CD4-positive, alpha-beta T cell (primary cell): ENCODE measurements at regions of chr6 and their contacts with region 1.

Region 1: DNA sequence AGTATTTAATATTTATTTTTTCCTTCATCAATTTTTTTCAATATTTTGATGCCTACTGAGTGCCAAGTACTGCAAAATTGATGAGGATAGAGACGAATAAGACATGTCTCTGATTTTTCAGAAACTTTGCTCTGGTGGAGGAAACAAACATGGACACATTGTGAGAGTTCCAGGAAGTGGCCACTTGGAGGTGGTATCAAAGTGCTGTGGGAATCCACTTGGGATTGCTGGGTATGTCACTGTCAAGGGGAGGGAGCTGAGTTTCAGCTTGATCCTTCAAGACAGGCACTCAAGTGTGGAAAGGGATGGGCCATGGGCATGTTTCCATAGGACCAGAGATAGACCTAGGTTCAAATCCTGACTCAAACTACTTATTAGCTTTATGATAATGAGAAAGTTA is 24.5 kb upstream of the ABCC10 start:
- DNase-seq: no peak
- ATAC-seq: no peak
- H3K4me3 ChIP-seq: no peak overlapping the region
- H3K4me3 Mint-ChIP-seq: no peak overlapping the region
- H3K27ac ChIP-seq: no peak overlapping the region
- H3K27ac Mint-ChIP-seq: no peak overlapping the region
- H3K4me1 ChIP-seq: no peaks in the 10 kb centered on the region
- H3K4me1 Mint-ChIP-seq: peaks cover 3% of the 10 kb centered on the region
- H3K27me3 ChIP-seq: peaks cover 0 to 5% of the 10 kb centered on the region in 2 experiments
- H3K27me3 Mint-ChIP-seq: peaks cover 20% of the 10 kb centered on the region
- CTCF ChIP-seq: no peak

Region 2: GRCh38 chr6:41824571-41825569 is 1578.0 kb before region 1 on chr6:
- CTCF ChIA-PET with region 1: no interaction called
- POLR2A ChIA-PET with region 1: no interaction called
- intact Hi-C with region 1: no loop called
- DNase-seq: no peak
- ATAC-seq: no peak
- H3K4me3 ChIP-seq: no peak overlapping the region
- H3K4me3 Mint-ChIP-seq: no peak overlapping the region
- H3K27ac ChIP-seq: no peak overlapping the region
- H3K27ac Mint-ChIP-seq: no peak overlapping the region
- H3K4me1 ChIP-seq: no peaks in the 10 kb centered on the region
- H3K4me1 Mint-ChIP-seq: no peaks in the 10 kb centered on the region
- H3K27me3 ChIP-seq: no peaks in the 10 kb centered on the region
- H3K27me3 Mint-ChIP-seq: no peaks in the 10 kb centered on the region
- CTCF ChIP-seq: no peak

Region 3: GRCh38 chr6:43216200-43216599 is 186.6 kb before region 1 on chr6:
- CTCF ChIA-PET with region 1: no interaction called
- POLR2A ChIA-PET with region 1: no interaction called
- intact Hi-C with region 1: no loop called
- DNase-seq: no peak
- ATAC-seq: no peak
- H3K4me3 ChIP-seq: no peak overlapping the region
- H3K4me3 Mint-ChIP-seq: no peak overlapping the region
- H3K27ac ChIP-seq: no peak overlapping the region
- H3K27ac Mint-ChIP-seq: no peak overlapping the region
- H3K4me1 ChIP-seq: peaks cover 6% of the 10 kb centered on the region
- H3K4me1 Mint-ChIP-seq: peaks cover 13% of the 10 kb centered on the region
- H3K27me3 ChIP-seq: no peaks in the 10 kb centered on the region
- H3K27me3 Mint-ChIP-seq: no peaks in the 10 kb centered on the region
- CTCF ChIP-seq: no peak

Region 4: DNA sequence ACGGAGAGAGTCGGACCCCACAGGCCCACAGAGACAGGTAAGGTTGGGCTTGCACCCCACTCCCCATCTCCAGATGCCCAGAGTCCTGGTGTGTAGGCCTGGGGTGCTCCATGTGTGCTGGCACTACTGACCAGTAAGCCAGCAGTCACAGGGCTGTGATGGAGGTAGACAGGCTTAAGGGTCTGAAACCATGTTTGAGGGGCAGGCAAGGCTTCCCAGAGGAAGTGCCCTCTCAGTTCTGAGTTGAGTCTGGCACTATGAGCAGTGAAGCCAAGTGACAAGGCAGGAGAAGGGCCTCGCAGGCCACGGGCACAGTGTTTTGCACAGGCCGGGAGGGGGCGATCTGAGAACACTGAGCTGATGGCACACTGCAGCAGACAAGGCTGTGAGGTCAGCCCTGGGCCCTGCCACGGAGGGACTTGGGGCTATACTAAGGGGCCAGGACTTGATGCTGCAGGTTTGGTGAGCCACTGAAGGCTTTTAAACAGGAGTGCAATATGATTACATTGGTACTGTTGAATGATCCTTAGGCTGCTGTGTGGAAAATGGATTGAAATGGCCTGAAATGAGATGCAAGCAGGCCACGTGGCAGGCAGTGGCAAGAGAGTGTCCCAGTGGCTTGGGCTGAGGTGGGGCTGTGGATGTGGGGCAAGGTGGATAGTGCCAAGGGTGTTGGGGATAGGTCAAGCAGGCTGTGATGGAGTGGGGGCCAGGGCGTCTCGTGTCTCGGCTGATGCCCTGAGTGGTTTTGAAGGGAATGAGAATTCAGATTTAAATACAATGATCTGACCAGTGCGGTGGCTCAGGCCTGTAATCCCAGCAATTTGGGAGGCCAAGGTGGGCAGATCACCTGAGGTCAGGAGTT is 139.3 kb before region 1 on chr6:
- CTCF ChIA-PET with region 1: interaction called, 8 read pairs
- POLR2A ChIA-PET with region 1: no interaction called
- intact Hi-C with region 1: loop called (anchors 1 kb)
- DNase-seq: peak; percentile 62 to 85 (median 73)
- ATAC-seq: peak; percentile 96
- H3K4me3 ChIP-seq: no peak overlapping the region
- H3K4me3 Mint-ChIP-seq: no peak overlapping the region
- H3K27ac ChIP-seq: no peak overlapping the region
- H3K27ac Mint-ChIP-seq: no peak overlapping the region
- H3K4me1 ChIP-seq: peaks cover 3% of the 10 kb centered on the region
- H3K4me1 Mint-ChIP-seq: no peaks in the 10 kb centered on the region
- H3K27me3 ChIP-seq: peaks cover 0 to 2% of the 10 kb centered on the region in 2 experiments
- H3K27me3 Mint-ChIP-seq: no peaks in the 10 kb centered on the region
- CTCF ChIP-seq: peak; percentile 72

Region 5: DNA sequence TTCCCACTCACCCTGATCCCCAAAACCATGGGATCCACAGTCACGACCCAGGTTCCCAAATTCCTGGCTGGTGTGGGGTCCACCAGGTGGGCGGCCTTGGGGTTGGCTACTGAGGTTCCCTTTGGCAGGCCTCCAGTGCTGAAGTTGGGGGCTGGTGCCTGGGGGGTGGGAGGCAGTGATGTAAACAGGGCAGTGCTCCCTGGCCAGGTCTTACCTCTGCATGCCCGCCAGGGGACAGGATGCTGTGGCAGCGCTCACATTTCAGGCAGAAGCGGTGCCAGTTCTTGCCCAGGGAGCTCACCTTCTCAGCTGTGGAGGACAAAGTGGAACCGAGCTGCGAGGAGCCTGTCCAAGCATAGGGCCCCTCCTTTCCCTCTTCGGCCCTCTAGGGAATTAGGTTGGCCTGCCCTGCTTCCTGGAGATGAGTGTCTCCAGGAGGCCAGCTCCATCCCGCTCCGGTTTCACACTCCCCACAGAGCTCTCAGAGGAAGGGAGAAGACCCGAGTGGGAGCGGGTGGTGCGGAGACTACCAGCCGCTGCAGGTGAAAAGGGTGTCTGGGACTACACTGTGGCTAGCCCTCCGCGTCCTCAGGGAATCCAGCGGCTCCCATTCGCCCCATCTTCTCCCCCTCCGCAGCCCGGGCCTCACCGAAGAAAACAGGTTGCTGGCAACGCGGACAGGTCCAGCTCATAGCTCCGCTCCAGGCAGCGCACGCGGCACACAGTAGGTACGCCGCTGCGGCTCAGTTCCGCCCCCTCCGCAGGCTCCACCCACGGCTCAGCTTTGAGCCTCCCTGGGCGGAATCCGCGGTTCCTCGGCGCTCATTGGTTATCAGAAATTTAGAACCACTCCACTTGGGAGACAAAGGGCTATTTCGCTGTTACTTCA is 94.5 kb before region 1 on chr6 and contains the start of gene CRIP3:
- CTCF ChIA-PET with region 1: interaction called, 6 read pairs
- POLR2A ChIA-PET with region 1: interaction called, 3 read pairs
- intact Hi-C with region 1: loop called (anchors 1 to 2 kb)
- DNase-seq: peak; percentile 18 to 73 (median 48)
- ATAC-seq: peak; percentile 85
- H3K4me3 ChIP-seq: peak within 1 kb of the TSS; percentile 63
- H3K4me3 Mint-ChIP-seq: peak within 1 kb of the TSS; percentile 82
- H3K27ac ChIP-seq: peak within 1 kb of the TSS in 1 of 2 donors; percentile 22
- H3K27ac Mint-ChIP-seq: no peak within 1 kb of the TSS
- H3K4me1 ChIP-seq: peaks cover 19% of the 10 kb centered on the region
- H3K4me1 Mint-ChIP-seq: peaks cover 7% of the 10 kb centered on the region
- H3K27me3 ChIP-seq: no peaks in the 10 kb centered on the region
- H3K27me3 Mint-ChIP-seq: no peaks in the 10 kb centered on the region
- CTCF ChIP-seq: peak; percentile 54
- total RNA-seq, gene CRIP3: 1.8 to 2.0 TPM

Region 6: DNA sequence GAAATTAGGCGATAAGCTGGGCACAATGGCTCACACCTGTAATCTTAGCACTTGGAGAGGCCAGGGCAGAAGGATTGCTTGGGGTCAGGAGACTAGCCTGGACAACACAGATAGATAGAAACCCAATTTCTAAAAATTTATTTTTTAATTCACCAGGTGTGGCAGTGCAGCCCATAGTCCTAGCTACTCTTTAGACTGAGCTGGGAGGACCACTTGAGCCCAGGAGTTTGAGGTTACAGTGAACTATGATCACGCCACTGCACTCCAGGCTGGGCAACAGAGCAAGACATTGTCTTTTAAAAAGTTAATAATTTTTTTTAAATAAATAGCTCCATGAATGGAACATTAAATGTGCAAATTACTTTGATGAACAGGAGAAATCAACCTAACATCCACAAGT is 41.6 kb before region 1 on chr6:
- CTCF ChIA-PET with region 1: interaction called, 8 read pairs
- POLR2A ChIA-PET with region 1: interaction called, 4 read pairs
- intact Hi-C with region 1: loop called in 1 of 2 experiments (anchors 1 kb)
- DNase-seq: peak in 1 of 14 experiments; percentile 23
- ATAC-seq: peak; percentile 29
- H3K4me3 ChIP-seq: no peak overlapping the region
- H3K4me3 Mint-ChIP-seq: no peak overlapping the region
- H3K27ac ChIP-seq: no peak overlapping the region
- H3K27ac Mint-ChIP-seq: no peak overlapping the region
- H3K4me1 ChIP-seq: peaks cover 6% of the 10 kb centered on the region
- H3K4me1 Mint-ChIP-seq: peaks cover 26% of the 10 kb centered on the region
- H3K27me3 ChIP-seq: no peaks in the 10 kb centered on the region
- H3K27me3 Mint-ChIP-seq: no peaks in the 10 kb centered on the region
- CTCF ChIP-seq: no peak